ENCODE measurements at regions of chr15 and their contacts with region 1.

Region 1: GRCh38 chr15:72155635-72156616 is 37.7 kb downstream of the SENP8 start:
- DNase-seq: peak; percentile 89
- H3K4me3 ChIP-seq: peak overlapping the region; percentile 24 to 58 (median 48)
- H3K27ac ChIP-seq: peak overlapping the region; percentile 70 to 87 (median 76)
- H3K4me1 ChIP-seq: peaks cover 0 to 30% (median 22%) of the 10 kb centered on the region in 4 donors
- H3K27me3 ChIP-seq: no peaks in the 10 kb centered on the region
- CTCF ChIP-seq: peak; percentile 78 to 90 (median 82)
- EP300 ChIP-seq: no peak
- POLR2A ChIP-seq: no peak

Region 2: DNA sequence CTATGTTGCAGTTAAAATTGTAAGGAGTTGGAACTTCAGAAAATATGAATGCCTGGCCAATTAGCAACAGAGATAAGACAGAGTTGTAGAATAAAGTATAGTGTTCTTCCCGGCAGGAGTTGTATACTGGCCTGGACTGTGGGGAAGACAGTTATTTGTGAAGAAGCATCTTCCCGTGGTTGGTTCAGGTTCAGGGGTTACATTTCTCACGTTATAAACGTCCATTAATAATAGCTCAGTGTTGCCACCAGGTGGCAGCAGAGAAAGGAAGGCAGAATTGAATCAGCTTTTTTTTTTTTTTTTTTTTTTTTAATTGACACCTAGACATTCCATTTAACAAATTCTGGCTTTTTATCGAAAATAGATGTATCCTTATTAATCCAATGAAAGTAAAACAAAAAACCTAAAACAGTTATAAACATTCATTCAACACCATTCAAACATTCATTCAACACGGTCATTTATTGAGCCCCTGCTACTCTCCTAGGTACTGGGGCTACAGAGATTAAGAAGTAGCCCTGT is 412.0 kb before region 1 on chr15:
- intact Hi-C with region 1: loop called (anchors 1 kb)
- DNase-seq: no peak
- H3K4me3 ChIP-seq: no peak overlapping the region
- H3K27ac ChIP-seq: no peak overlapping the region
- H3K4me1 ChIP-seq: no peaks in the 10 kb centered on the region
- H3K27me3 ChIP-seq: no peaks in the 10 kb centered on the region
- CTCF ChIP-seq: peak; percentile 28 to 56 (median 50)
- EP300 ChIP-seq: no peak
- POLR2A ChIP-seq: no peak

Region 3: GRCh38 chr15:71780115-71780976 is 375.6 kb before region 1 on chr15:
- intact Hi-C with region 1: loop called (anchors 2 kb)
- DNase-seq: no peak
- H3K4me3 ChIP-seq: no peak overlapping the region
- H3K27ac ChIP-seq: no peak overlapping the region
- H3K4me1 ChIP-seq: no peaks in the 10 kb centered on the region
- H3K27me3 ChIP-seq: no peaks in the 10 kb centered on the region
- CTCF ChIP-seq: peak in 3 of 4 experiments; percentile 27 to 59 (median 48)
- EP300 ChIP-seq: no peak
- POLR2A ChIP-seq: no peak

Region 4: DNA sequence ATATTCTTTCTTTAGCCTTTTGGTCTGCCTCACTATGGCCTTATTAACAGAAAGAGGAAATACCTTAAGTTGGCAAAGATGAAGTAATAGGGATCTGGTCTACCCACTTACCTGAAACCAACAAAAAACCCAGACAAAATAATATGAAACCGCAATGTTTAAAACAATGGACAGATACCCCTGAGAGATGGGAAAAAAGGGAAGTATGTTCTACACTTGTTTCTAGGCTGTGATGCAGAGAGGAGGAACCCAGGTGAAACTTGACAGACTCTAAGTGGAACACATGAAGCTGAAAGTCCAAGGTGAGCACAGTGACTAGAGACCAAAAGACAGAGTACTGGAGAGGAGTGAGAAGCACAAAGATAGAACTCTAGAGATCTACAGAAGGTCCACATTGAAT is 267.1 kb before region 1 on chr15:
- intact Hi-C with region 1: loop called (anchors 10 kb)
- DNase-seq: no peak
- H3K4me3 ChIP-seq: no peak overlapping the region
- H3K27ac ChIP-seq: no peak overlapping the region
- H3K4me1 ChIP-seq: peaks cover 0 to 3% (median 0%) of the 10 kb centered on the region in 4 donors
- H3K27me3 ChIP-seq: no peaks in the 10 kb centered on the region
- CTCF ChIP-seq: no peak
- EP300 ChIP-seq: no peak
- POLR2A ChIP-seq: no peak

Region 5: GRCh38 chr15:72037321-72037720 is 118.6 kb before region 1 on chr15:
- intact Hi-C with region 1: loop called (anchors 10 kb)
- DNase-seq: no peak
- H3K4me3 ChIP-seq: no peak overlapping the region
- H3K27ac ChIP-seq: no peak overlapping the region
- H3K4me1 ChIP-seq: peaks cover 0 to 43% (median 31%) of the 10 kb centered on the region in 4 donors
- H3K27me3 ChIP-seq: no peaks in the 10 kb centered on the region
- CTCF ChIP-seq: no peak
- EP300 ChIP-seq: no peak
- POLR2A ChIP-seq: no peak

Region 6: DNA sequence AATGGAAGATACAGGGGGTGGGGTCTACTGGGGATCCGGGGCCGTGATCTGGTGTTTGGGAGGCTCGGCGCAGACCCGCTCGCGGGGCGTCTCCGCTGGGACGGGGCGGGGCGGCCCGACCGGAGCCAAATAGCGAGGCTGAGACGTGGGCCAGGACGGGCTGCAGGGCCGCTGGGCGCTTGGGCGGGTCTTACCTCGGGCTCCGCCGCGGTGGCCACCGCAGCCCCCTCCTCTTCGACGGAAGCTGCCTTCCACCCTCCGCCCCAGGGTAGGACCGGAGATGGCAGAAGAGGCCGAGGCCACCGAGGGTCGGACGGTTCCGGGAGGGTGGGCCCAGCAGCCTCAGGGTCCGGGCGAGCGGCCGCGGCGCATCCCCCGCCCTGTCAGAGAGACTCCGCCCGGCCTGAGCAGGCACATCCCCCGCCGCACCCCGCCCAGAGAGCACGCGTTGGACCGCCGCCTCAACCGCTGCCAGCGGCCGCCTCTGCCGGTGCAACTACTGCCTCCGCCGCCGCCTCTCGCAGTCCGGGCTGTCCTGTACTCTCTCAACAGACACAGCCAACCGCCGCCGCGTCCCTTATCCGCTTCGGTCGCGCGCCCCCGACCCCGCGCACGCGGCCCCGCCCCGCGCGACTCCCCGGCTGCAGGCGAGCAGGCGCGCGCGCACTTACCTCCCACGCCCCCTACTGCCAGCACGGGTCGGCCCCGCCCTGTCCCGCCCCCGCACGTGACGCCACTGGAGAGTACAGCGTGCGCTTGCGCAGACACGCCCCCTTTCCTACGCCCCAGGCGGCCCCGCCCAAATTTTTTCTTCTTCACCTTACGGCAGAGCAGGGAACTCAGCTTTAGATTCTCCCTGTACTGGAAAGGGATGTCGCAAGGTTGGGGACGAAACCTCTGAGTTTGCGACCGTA is 38.2 kb before region 1 on chr15 and contains the start of gene MYO9A:
- intact Hi-C with region 1: loop called (anchors 2 kb)
- DNase-seq: peak; percentile 98
- H3K4me3 ChIP-seq: peak within 1 kb of the TSS; percentile 71 to 93 (median 80)
- H3K27ac ChIP-seq: peak within 1 kb of the TSS; percentile 92 to 98 (median 94)
- H3K4me1 ChIP-seq: peaks cover 0 to 48% (median 39%) of the 10 kb centered on the region in 4 donors
- H3K27me3 ChIP-seq: no peaks in the 10 kb centered on the region
- CTCF ChIP-seq: no peak
- EP300 ChIP-seq: peak in 1 of 4 donors; percentile 10
- POLR2A ChIP-seq: peak in 1 of 2 donors; percentile 49
- total RNA-seq, gene MYO9A: 55.8 to 80.0 (median 62.8) TPM